Activated T-helper 2 cell treated with anti-CD3 and anti-CD28 coated beads, Interferon-gamma antibody, Interleukin-2, Interleukin-4, amounts not matched to agents 10 μg/mL and 5 μg/mL and 100 μg/mL, durations not matched to agents 14 hours and 24 hours and 36 hours (primary cell): ENCODE measurements at regions of chr2 and their contacts with region 1.

Region 1: DNA sequence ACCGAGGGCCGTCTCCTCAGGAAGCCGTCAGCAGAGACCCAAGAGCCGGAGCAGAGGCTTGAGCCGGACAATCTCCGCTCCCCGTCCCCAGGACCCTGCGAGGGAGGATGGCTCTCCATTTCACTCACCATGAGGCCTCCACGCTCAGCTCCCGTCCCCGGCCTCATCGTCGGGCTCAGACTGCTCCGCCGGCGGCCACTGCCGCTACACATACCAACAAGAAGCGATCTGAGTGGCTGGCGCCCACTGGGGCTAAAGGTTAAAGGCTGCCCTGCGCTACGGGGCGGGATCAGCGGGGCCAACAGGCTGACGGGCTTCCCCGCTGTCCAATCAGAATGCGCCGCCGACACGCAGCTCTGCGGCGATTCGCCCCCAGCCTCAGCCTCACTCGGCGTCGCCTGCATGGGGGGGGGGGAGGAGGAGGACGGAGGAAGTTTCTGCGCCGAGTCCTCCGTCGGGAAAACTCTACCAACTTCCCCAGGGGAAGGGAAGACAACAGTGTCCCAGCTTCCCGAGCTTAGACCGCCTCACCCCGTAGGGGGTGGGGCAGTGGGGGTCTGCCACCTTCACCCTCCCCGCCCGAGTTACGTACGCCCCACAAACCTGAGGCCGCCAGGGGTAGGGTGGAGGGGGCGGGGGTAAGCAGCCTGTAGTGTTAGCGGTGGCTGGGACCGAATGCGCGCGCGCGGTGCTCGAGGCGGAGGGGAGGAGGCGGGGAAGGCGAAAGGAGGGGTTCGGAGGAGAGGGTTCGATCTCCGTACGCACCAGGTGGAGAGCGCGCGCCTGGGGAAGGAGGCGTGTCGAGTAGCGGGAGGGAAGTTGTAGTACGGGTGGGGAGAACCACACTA is at the start of gene PRPF40A:
- DNase-seq: peak; percentile 97
- H3K4me3 Mint-ChIP-seq: peak within 1 kb of the TSS; percentile 98
- H3K27ac Mint-ChIP-seq: peak within 1 kb of the TSS; percentile 98
- H3K4me1 Mint-ChIP-seq: peaks cover 46% of the 10 kb centered on the region
- H3K27me3 Mint-ChIP-seq: no peaks in the 10 kb centered on the region
- total RNA-seq, gene PRPF40A: 144 and 170 TPM in 2 replicates

Region 2: DNA sequence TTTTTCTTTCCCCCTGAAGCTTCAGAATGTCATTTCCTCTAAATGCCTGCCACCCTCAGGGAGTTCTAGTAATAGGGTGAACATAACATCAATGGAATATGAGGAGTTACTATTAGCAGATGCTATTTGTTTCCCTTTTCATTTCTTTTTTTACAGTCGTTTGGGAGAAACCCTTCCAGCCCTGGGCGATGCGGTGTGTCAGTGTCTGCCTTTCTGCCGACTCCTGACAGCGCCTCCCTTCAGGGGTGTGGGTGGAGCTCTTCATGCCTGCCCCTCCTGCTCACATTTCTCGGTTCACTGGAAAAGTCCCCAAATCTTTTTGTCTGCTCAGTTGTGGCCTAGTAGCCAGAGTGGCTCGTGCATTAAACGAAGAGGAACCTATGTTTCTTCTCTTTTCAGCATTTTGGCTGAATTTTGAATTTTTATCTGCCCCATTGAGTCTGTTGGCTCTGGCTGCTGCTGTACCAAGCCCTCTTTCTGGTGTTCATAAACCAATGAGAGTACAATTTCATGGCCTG is 310.2 kb before region 1 on chr2:
- intact Hi-C with region 1: loop called (anchors 2 kb)
- DNase-seq: no peak
- H3K4me3 Mint-ChIP-seq: peak overlapping the region; percentile 67
- H3K27ac Mint-ChIP-seq: peak overlapping the region; percentile 84
- H3K4me1 Mint-ChIP-seq: peaks cover 74% of the 10 kb centered on the region
- H3K27me3 Mint-ChIP-seq: no peaks in the 10 kb centered on the region

Region 3: DNA sequence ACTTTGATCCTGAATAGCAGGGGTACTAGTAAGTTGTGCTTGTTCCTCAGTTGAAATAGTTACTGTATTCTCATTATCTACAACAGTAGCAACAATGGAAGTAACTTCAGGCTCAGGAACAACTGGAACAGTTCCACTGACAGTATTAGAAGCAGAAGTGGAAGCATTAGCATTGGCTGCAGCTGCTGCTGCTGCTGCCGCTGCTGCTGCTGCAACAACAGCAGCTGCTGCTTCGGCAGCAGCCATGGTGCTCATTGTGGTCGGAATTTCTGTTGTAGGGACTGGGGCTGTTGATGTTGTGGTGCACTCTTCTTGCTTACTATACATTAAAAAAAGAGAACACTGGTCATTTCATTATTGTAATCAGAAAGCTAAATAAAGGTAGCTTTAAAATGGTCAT is 41.0 kb before region 1 on chr2:
- intact Hi-C with region 1: loop called (anchors 5 kb)
- DNase-seq: no peak
- H3K4me3 Mint-ChIP-seq: no peak overlapping the region
- H3K27ac Mint-ChIP-seq: no peak overlapping the region
- H3K4me1 Mint-ChIP-seq: peaks cover under 1% of the 10 kb centered on the region
- H3K27me3 Mint-ChIP-seq: no peaks in the 10 kb centered on the region

Region 4: GRCh38 chr2:152694161-152694661 is 23.2 kb before region 1 on chr2:
- intact Hi-C with region 1: loop called (anchors 1 kb)
- DNase-seq: peak; percentile 34
- H3K4me3 Mint-ChIP-seq: peak overlapping the region; percentile 77
- H3K27ac Mint-ChIP-seq: peak overlapping the region; percentile 90
- H3K4me1 Mint-ChIP-seq: peaks cover 29% of the 10 kb centered on the region
- H3K27me3 Mint-ChIP-seq: no peaks in the 10 kb centered on the region

Region 5: GRCh38 chr2:152706477-152707020 is 10.9 kb before region 1 on chr2:
- intact Hi-C with region 1: no loop called
- DNase-seq: no peak
- H3K4me3 Mint-ChIP-seq: no peak overlapping the region
- H3K27ac Mint-ChIP-seq: no peak overlapping the region
- H3K4me1 Mint-ChIP-seq: peaks cover 35% of the 10 kb centered on the region
- H3K27me3 Mint-ChIP-seq: no peaks in the 10 kb centered on the region

Region 6: DNA sequence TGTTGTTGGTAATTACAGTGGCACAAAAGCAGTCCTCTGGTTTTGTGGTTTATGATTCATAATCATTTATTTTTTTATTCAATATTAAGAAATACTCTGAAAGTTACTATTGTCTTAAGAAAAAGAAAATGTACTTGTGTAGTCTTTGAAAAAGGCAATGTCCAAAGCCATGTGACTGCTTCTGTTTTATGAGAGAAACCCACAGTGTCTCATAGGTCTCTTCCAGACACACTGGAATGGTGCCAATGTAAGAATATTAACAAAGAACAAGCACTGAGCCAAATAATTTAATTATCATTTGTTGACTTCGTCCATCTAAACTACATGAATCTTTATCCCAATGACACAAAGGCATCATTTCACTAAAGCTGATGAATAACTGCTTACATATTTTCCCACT is 698.6 kb after region 1 on chr2:
- intact Hi-C with region 1: no loop called
- DNase-seq: no peak
- H3K4me3 Mint-ChIP-seq: no peak overlapping the region
- H3K27ac Mint-ChIP-seq: no peak overlapping the region
- H3K4me1 Mint-ChIP-seq: no peaks in the 10 kb centered on the region
- H3K27me3 Mint-ChIP-seq: no peaks in the 10 kb centered on the region